MCF 10A (cell line): ENCODE measurements at regions of chr11 and their contacts with region 1.

Region 1: DNA sequence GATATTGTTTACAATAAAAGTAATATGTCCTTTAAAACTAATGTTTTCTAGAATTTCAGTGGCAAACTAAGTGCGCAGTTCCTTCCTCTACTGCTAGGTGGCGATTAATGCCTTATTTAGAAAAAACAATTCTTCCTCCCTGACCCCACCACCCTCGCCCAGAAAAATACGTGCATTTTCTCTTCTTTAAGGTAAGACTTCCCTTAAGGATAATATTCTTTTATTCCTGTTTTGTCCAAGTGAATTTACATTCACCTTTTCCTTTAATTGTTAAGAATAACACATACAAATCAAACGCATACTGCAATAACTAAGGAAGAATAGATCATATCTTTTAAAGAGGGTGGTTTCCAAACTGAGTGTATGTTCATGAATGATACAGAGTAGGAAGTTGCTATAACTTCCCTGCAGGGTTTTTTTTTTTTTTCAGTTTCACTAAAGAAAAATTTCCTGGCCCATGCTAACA is 17.0 kb upstream of the PSMA1 start:
- DNase-seq: peak; percentile 35
- H3K4me3 Mint-ChIP-seq: no peak overlapping the region
- H3K27ac Mint-ChIP-seq: no peak overlapping the region
- H3K4me1 Mint-ChIP-seq: no peaks in the 10 kb centered on the region
- H3K27me3 Mint-ChIP-seq: no peaks in the 10 kb centered on the region
- CTCF ChIP-seq: peak; percentile 62

Region 2: GRCh38 chr11:14480716-14481115 is 56.5 kb before region 1 on chr11:
- CTCF ChIA-PET with region 1: no interaction called
- POLR2A ChIA-PET with region 1: no interaction called
- intact Hi-C with region 1: no loop called
- DNase-seq: no peak
- H3K4me3 Mint-ChIP-seq: no peak overlapping the region
- H3K27ac Mint-ChIP-seq: peak overlapping the region; percentile 57
- H3K4me1 Mint-ChIP-seq: peaks cover 6% of the 10 kb centered on the region
- H3K27me3 Mint-ChIP-seq: no peaks in the 10 kb centered on the region
- CTCF ChIP-seq: no peak

Region 3: GRCh38 chr11:14764579-14765527 is 227.7 kb after region 1 on chr11:
- CTCF ChIA-PET with region 1: interaction called, 3 read pairs
- POLR2A ChIA-PET with region 1: no interaction called
- intact Hi-C with region 1: loop called (anchors 5 kb)
- DNase-seq: peak; percentile 25
- H3K4me3 Mint-ChIP-seq: no peak overlapping the region
- H3K27ac Mint-ChIP-seq: no peak overlapping the region
- H3K4me1 Mint-ChIP-seq: no peaks in the 10 kb centered on the region
- H3K27me3 Mint-ChIP-seq: peaks cover 21% of the 10 kb centered on the region
- CTCF ChIP-seq: no peak

Region 4: DNA sequence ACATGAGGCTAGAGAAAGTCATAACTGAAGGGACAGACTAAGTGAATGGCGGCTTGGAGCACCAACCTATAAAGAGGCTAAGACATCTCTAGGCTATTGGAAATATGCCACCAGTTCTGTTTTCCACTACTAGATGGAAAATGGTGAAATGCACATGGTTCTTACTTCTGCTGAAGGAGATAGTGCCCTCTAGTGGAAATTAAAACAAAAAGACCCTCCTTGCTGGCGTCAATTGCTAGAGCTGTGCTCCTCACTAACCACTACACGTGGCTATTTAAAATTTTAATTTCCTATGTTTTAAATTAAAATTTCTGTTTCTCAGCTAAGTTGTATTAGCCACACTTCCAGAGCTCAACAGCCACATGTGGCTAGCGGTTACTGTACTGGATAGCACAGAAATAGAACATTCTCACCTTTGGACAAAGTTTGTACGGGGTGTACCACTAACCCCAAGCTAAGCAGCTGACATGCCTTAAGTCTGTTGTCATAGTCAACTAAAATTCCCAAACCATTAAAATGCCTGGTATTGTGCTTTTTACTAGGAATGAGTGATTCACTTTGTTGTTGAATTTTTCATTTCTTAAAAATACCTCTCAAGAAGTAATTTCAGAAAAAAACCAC is 469.1 kb after region 1 on chr11:
- CTCF ChIA-PET with region 1: no interaction called
- POLR2A ChIA-PET with region 1: no interaction called
- intact Hi-C with region 1: loop called (anchors 1 kb)
- DNase-seq: peak; percentile 57
- H3K4me3 Mint-ChIP-seq: no peak overlapping the region
- H3K27ac Mint-ChIP-seq: no peak overlapping the region
- H3K4me1 Mint-ChIP-seq: no peaks in the 10 kb centered on the region
- H3K27me3 Mint-ChIP-seq: peaks cover 62% of the 10 kb centered on the region
- CTCF ChIP-seq: peak; percentile 50